MCF 10A (cell line): ENCODE measurements at regions of chr12 and their contacts with region 1.

Region 1: DNA sequence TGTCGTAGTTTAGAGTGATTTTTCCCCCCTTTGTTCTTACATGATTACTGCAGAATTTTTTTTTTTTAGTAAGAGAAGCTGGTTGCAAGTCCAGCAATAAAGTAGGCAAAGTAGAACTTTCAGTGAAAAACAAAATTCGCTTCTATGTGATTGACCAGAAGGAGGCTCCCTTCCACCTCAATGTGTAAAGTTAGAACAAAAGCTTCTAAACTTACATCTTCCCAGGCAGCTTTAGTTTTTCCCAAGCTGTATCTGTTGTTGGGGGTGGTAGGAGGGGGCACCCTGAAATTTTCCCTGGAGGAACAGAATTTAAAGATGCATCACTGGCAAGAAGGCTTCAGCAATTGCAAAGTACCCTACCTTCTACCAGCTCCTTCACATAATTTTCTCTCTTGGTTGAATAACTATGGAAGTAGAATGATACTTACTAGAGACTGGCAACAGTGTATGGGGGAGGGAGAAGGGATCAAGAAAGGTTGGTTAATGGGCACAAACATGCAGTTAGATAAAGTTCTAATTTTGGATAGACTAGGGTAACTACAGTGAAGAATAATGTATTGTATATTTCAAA is 87.3 kb upstream of the E2F7 start:
- DNase-seq: peak; percentile 48
- H3K4me3 Mint-ChIP-seq: no peak overlapping the region
- H3K27ac Mint-ChIP-seq: no peak overlapping the region
- H3K4me1 Mint-ChIP-seq: no peaks in the 10 kb centered on the region
- H3K27me3 Mint-ChIP-seq: no peaks in the 10 kb centered on the region
- CTCF ChIP-seq: peak; percentile 69

Region 2: DNA sequence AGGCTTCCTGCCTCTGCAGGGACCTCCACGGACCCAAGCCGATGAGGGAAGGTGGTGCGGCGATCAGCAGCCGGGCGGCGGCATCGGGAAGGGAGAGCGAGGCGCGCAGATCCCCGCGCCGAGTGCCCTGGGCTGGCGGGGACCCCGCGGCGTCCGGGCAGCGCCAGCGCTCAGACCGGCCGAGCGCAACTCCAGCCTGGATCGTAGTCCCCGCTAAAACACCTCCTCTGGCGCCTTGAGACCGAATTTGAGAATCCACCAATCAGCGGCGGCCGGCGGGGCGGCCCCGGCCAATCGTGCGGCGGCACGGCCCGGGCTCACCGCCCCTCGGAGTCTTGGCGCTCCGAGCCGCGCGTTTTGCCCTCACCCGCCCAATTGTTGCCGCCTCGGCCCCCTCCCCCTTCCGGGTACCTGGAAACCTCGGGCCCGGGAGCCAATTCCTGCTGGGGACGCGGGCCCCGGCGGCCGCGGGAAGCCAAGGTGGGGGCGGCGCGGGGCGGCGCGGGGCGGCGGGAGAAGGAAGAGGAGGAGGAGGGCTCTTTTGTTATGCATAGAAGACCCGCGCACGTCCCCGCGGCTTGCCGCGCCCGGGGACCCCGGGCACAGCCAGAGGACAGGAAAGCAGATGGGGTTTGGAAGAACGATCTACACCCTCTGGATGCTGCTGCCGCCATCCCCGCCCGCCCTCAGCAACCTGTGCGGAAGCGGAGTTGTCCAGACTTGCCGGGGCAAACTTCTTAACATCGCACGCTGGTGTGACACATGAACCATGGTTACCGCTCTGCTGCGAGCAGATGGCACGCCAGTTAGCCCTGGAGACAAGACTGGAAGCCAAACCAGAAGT is 87.1 kb before region 1 on chr12 and contains the start of gene E2F7:
- CTCF ChIA-PET with region 1: interaction called, 5 read pairs
- POLR2A ChIA-PET with region 1: interaction called, 3 read pairs
- intact Hi-C with region 1: loop called (anchors 1 kb)
- DNase-seq: peak; percentile 94
- H3K4me3 Mint-ChIP-seq: peak within 1 kb of the TSS; percentile 69
- H3K27ac Mint-ChIP-seq: peak within 1 kb of the TSS; percentile 77
- H3K4me1 Mint-ChIP-seq: peaks cover 37% of the 10 kb centered on the region
- H3K27me3 Mint-ChIP-seq: no peaks in the 10 kb centered on the region
- CTCF ChIP-seq: no peak
- total RNA-seq, gene E2F7: 23.5 and 34.4 TPM in 2 replicates

Region 3: GRCh38 chr12:77087427-77087826 is 65.3 kb before region 1 on chr12:
- CTCF ChIA-PET with region 1: no interaction called
- POLR2A ChIA-PET with region 1: no interaction called
- intact Hi-C with region 1: no loop called
- DNase-seq: no peak
- H3K4me3 Mint-ChIP-seq: no peak overlapping the region
- H3K27ac Mint-ChIP-seq: no peak overlapping the region
- H3K4me1 Mint-ChIP-seq: no peaks in the 10 kb centered on the region
- H3K27me3 Mint-ChIP-seq: no peaks in the 10 kb centered on the region
- CTCF ChIP-seq: no peak

Region 4: DNA sequence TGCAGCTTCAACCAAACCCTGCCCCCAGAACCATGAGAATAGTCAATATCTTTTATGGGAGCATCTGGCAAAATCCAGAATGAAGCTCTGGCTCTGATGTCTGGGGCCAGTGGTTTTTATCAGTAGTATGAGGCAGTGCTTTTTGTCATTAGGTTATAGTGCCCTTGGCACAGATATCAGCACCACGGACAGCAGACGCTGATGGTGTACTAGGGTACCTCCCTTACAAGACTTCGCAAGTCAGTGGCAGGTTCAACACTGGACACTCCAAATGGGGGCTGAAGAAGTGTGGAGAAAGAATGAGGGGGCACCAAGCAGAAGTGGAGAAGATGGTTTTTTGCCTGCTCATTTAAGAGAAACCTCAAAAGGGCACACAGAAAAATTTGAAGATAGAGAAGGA is 19.1 kb before region 1 on chr12:
- CTCF ChIA-PET with region 1: interaction called, 16 read pairs
- POLR2A ChIA-PET with region 1: no interaction called
- intact Hi-C with region 1: no loop called
- DNase-seq: peak; percentile 77
- H3K4me3 Mint-ChIP-seq: no peak overlapping the region
- H3K27ac Mint-ChIP-seq: no peak overlapping the region
- H3K4me1 Mint-ChIP-seq: no peaks in the 10 kb centered on the region
- H3K27me3 Mint-ChIP-seq: no peaks in the 10 kb centered on the region
- CTCF ChIP-seq: no peak

Region 5: GRCh38 chr12:77324763-77325468 is 172.2 kb after region 1 on chr12:
- CTCF ChIA-PET with region 1: interaction called, 31 read pairs
- POLR2A ChIA-PET with region 1: no interaction called
- intact Hi-C with region 1: loop called (anchors 1 kb)
- DNase-seq: peak; percentile 75
- H3K4me3 Mint-ChIP-seq: peak overlapping the region; percentile 91
- H3K27ac Mint-ChIP-seq: peak overlapping the region; percentile 53
- H3K4me1 Mint-ChIP-seq: peaks cover 14% of the 10 kb centered on the region
- H3K27me3 Mint-ChIP-seq: peaks cover 13% of the 10 kb centered on the region
- CTCF ChIP-seq: peak; percentile 31